SK-N-SH (cell line): ENCODE measurements at regions of chr11 and their contacts with region 1.

Region 1: DNA sequence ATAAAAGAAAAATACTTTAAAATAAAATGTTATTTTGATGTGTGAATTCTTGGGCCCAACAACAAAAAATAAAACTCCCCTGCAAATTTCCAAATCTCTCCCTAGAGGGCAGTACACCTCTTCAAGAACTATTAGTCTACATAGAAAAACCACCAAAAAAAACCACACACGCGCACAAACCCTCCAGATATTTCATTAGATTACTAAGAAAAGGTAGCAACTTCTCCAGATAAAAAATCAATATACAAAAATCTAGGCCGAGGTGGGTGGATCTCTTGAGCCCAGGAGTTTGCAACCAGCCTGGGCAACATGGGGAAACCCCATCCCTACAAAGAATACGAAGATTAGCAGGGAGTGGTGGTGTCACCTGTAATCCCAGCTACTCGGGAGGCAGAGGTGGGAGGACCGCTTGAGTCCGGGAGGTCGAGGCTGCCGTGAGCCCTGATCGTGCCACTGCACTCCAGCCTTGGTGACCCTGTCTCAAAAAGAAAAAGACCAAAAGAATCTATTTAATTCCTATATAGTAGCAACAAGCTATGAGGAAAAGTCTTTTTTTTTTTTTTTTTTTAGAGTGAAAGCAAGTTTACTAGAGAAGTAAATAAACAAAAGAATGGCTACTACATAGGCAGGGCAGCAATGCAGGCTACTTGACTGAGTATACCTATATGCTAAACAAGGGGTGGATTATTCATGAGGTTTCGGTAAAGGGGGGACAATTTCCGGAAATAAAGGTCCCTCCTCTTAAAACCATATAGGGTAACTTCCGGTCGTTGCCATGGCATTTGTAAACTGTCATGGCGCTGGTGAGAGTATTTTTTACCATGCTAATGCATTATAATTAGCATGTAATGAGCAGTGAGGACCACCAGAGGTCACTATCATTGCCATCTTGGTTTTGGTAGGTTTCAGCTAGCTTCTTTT is 13.1 kb downstream of the B3GNT6 start:
- DNase-seq: peak; percentile 82
- H3K4me3 ChIP-seq: peak overlapping the region; percentile 34 to 67
- H3K27ac ChIP-seq: peak overlapping the region in 1 of 2 experiments; percentile 48; a peak in 1 of 4 replicates
- H3K4me1 ChIP-seq: peaks cover 3 to 6% of the 10 kb centered on the region in 2 experiments; a peak in 2 of 4 replicates
- H3K27me3 ChIP-seq: no peaks in the 10 kb centered on the region
- CTCF ChIP-seq: peak; percentile 79
- EP300 ChIP-seq: no peak
- RAD21 ChIP-seq: peak; percentile 74

Region 2: DNA sequence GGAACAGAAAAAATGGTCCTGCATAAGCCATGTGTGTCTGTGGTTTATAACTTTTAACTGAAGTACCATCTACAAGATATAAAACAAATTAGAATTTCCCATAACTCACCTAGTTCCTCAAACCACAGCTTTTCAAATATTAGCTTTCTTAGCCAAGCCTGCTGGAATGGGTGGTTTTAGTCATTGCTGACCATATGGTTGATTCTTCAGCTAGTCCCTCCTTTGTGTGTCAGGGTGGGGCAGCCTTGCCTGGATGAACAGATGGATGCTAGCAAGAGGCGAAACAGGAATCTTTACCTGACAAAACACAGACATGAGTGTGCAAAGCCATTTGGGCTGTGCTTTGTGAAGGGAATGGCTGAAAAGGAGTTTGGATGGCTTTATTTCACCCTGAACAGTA is 20.0 kb before region 1 on chr11:
- CTCF ChIA-PET with region 1: interaction called, 10 read pairs
- POLR2A ChIA-PET with region 1: no interaction called
- DNase-seq: no peak
- H3K4me3 ChIP-seq: no peak overlapping the region
- H3K27ac ChIP-seq: no peak overlapping the region
- H3K4me1 ChIP-seq: no peaks in the 10 kb centered on the region
- H3K27me3 ChIP-seq: no peaks in the 10 kb centered on the region
- CTCF ChIP-seq: no peak
- EP300 ChIP-seq: no peak
- RAD21 ChIP-seq: no peak

Region 3: GRCh38 chr11:77073328-77074001 is 26.2 kb after region 1 on chr11:
- CTCF ChIA-PET with region 1: interaction called, 28 read pairs
- POLR2A ChIA-PET with region 1: no interaction called
- DNase-seq: peak; percentile 89
- H3K4me3 ChIP-seq: peak overlapping the region in 1 of 2 experiments; percentile 20; a peak in 1 of 4 replicates
- H3K27ac ChIP-seq: peak overlapping the region; percentile 94 to 97
- H3K4me1 ChIP-seq: peaks cover 38 to 66% of the 10 kb centered on the region in 2 experiments; a peak in 3 of 4 replicates
- H3K27me3 ChIP-seq: no peaks in the 10 kb centered on the region
- CTCF ChIP-seq: peak; percentile 66
- EP300 ChIP-seq: peak in 1 of 2 experiments; percentile 4; a peak in 2 of 4 replicates
- RAD21 ChIP-seq: peak; percentile 59

Region 4: GRCh38 chr11:77091146-77091940 is 44.1 kb after region 1 on chr11:
- CTCF ChIA-PET with region 1: interaction called, 218 read pairs
- POLR2A ChIA-PET with region 1: no interaction called
- DNase-seq: peak; percentile 93
- H3K4me3 ChIP-seq: no peak overlapping the region; a peak in 1 of 4 replicates
- H3K27ac ChIP-seq: no peak overlapping the region
- H3K4me1 ChIP-seq: peaks cover 0 to 21% of the 10 kb centered on the region in 2 experiments; a peak in 1 of 4 replicates
- H3K27me3 ChIP-seq: no peaks in the 10 kb centered on the region
- CTCF ChIP-seq: peak; percentile 89
- EP300 ChIP-seq: no peak
- RAD21 ChIP-seq: peak; percentile 95

Region 5: GRCh38 chr11:77113382-77114088 is 66.3 kb after region 1 on chr11:
- CTCF ChIA-PET with region 1: interaction called, 23 read pairs
- POLR2A ChIA-PET with region 1: no interaction called
- DNase-seq: peak; percentile 74
- H3K4me3 ChIP-seq: no peak overlapping the region; a peak in 1 of 4 replicates
- H3K27ac ChIP-seq: no peak overlapping the region
- H3K4me1 ChIP-seq: peaks cover 3 to 27% of the 10 kb centered on the region in 2 experiments; a peak in 3 of 4 replicates
- H3K27me3 ChIP-seq: no peaks in the 10 kb centered on the region
- CTCF ChIP-seq: peak; percentile 65
- EP300 ChIP-seq: no peak
- RAD21 ChIP-seq: peak; percentile 67